ENCODE measurements at regions of chr22 and their contacts with region 1.

Region 1: GRCh38 chr22:31496007-31496734 is at the start of gene SFI1:
- DNase-seq: peak; percentile 97
- ATAC-seq: peak; percentile 87
- H3K4me3 Mint-ChIP-seq: peak within 1 kb of the TSS; percentile 85
- H3K27ac Mint-ChIP-seq: peak within 1 kb of the TSS; percentile 93
- H3K4me1 Mint-ChIP-seq: peaks cover 55% of the 10 kb centered on the region
- H3K27me3 Mint-ChIP-seq: no peaks in the 10 kb centered on the region
- total RNA-seq, gene SFI1: 221 to 234 TPM

Region 2: DNA sequence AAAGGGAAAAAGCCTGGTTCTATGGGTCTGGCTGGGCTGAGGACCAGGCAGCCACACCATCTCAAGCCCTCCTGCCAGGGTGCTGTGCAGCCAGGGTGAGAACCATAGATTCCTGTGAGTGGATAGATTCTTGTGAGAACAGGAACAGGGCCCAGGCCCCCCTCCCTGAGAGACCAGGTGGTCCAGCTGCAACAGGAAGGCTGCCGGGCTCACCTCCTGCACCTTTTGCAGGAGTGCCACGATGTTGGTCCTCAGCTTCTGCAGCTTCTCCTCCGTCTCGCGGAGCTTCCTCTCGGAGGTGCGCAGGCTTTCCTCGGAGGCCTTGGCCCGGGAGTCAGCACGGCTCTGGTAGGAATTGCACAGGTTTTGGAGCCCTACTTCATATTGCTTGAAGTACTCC is 568.4 kb before region 1 on chr22:
- CTCF ChIA-PET with region 1: no interaction called
- POLR2A ChIA-PET with region 1: no interaction called
- intact Hi-C with region 1: no loop called
- DNase-seq: no peak
- ATAC-seq: no peak
- H3K4me3 Mint-ChIP-seq: no peak overlapping the region
- H3K27ac Mint-ChIP-seq: no peak overlapping the region
- H3K4me1 Mint-ChIP-seq: peaks cover 3% of the 10 kb centered on the region
- H3K27me3 Mint-ChIP-seq: no peaks in the 10 kb centered on the region

Region 3: GRCh38 chr22:31399211-31400028 is 96.8 kb before region 1 on chr22 and contains the start of gene DRG1:
- CTCF ChIA-PET with region 1: interaction called, 4 read pairs
- POLR2A ChIA-PET with region 1: no interaction called
- intact Hi-C with region 1: loop called in 1 of 2 experiments (anchors 1 kb)
- DNase-seq: peak; percentile 99
- ATAC-seq: peak; percentile 98
- H3K4me3 Mint-ChIP-seq: peak within 1 kb of the TSS; percentile 99
- H3K27ac Mint-ChIP-seq: peak within 1 kb of the TSS; percentile 91
- H3K4me1 Mint-ChIP-seq: peaks cover 18% of the 10 kb centered on the region
- H3K27me3 Mint-ChIP-seq: peaks cover under 1% of the 10 kb centered on the region
- total RNA-seq, gene DRG1: 104 to 106 TPM

Region 4: DNA sequence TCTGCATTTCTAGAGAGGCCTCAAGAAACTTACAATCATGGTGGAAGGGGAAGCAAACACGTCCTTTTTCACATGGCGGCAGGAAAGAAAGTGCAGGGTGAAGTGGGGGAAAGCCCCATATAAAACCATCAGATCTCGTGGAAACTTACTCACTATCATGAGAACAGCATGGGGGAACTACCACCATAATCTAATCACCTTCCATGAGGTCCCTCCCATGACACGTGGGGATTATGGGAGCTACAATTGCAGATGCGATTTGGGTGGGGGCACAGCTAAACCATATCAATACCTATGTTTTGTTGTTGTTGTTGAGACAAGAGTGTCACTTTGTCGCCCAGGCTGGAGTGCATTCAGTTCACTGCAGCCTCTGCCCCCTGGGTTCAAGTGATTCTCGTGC is 30.1 kb after region 1 on chr22:
- CTCF ChIA-PET with region 1: interaction called, 5 read pairs
- POLR2A ChIA-PET with region 1: interaction called, 3 read pairs
- intact Hi-C with region 1: loop called (anchors 1 to 2 kb)
- DNase-seq: peak; percentile 69
- ATAC-seq: peak; percentile 86
- H3K4me3 Mint-ChIP-seq: no peak overlapping the region
- H3K27ac Mint-ChIP-seq: peak overlapping the region; percentile 97
- H3K4me1 Mint-ChIP-seq: peaks cover 73% of the 10 kb centered on the region
- H3K27me3 Mint-ChIP-seq: no peaks in the 10 kb centered on the region

Region 5: DNA sequence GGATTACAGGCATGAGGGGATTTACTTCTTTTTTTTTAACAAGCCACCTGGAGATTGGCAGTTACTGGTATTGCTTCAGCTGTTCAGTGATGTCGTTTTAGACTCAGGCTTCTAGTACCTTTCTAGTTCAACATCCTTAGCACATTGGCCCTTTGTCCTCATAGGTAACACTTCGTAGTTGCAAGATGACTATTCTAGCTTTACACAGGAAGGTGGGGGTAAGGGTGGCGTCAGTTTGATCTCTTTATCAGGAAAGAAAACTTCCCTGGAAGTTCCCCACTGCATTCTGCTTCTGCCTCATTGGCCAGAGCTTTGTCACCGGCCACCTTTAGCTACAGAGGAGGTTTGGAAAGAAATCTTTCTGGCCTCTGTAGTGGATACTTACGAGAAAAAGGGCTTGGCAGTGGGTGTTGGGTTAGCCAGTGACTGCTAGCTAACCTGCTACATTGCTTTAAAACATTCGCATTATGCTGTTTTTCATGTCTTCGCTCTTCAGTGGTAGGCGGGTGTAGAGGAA is 40.9 kb after region 1 on chr22:
- CTCF ChIA-PET with region 1: interaction called, 4 read pairs
- POLR2A ChIA-PET with region 1: interaction called, 12 read pairs
- intact Hi-C with region 1: loop called (anchors 1 kb)
- DNase-seq: peak; percentile 76
- ATAC-seq: peak; percentile 86
- H3K4me3 Mint-ChIP-seq: peak overlapping the region; percentile 37
- H3K27ac Mint-ChIP-seq: peak overlapping the region; percentile 98
- H3K4me1 Mint-ChIP-seq: peaks cover 78% of the 10 kb centered on the region
- H3K27me3 Mint-ChIP-seq: no peaks in the 10 kb centered on the region

Region 6: GRCh38 chr22:31544481-31545480 is 48.6 kb after region 1 on chr22:
- CTCF ChIA-PET with region 1: interaction called, 4 read pairs
- POLR2A ChIA-PET with region 1: no interaction called
- intact Hi-C with region 1: loop called in 1 of 2 experiments (anchors 2 kb)
- DNase-seq: no peak
- ATAC-seq: no peak
- H3K4me3 Mint-ChIP-seq: no peak overlapping the region
- H3K27ac Mint-ChIP-seq: no peak overlapping the region
- H3K4me1 Mint-ChIP-seq: peaks cover 31% of the 10 kb centered on the region
- H3K27me3 Mint-ChIP-seq: no peaks in the 10 kb centered on the region

Region 7: GRCh38 chr22:31943976-31944699 is 448.0 kb after region 1 on chr22 and contains the start of gene YWHAH:
- CTCF ChIA-PET with region 1: no interaction called
- POLR2A ChIA-PET with region 1: no interaction called
- intact Hi-C with region 1: loop called in 1 of 2 experiments (anchors 10 kb)
- DNase-seq: peak; percentile 96
- ATAC-seq: peak; percentile 73
- H3K4me3 Mint-ChIP-seq: no peak within 1 kb of the TSS
- H3K27ac Mint-ChIP-seq: peak within 1 kb of the TSS; percentile 84
- H3K4me1 Mint-ChIP-seq: peaks cover 21% of the 10 kb centered on the region
- H3K27me3 Mint-ChIP-seq: no peaks in the 10 kb centered on the region
- total RNA-seq, gene YWHAH: 83.2 to 98.5 TPM

Measured in activated CD4-positive, alpha-beta T cell treated with anti-CD3 and anti-CD28 coated beads for 36 hours (primary cell).